PC-9 (cell line): ENCODE measurements at regions of chr7 and their contacts with region 1.

Region 1: GRCh38 chr7:45028920-45029344 is 28.9 kb downstream of the CCM2 start:
- DNase-seq: no peak
- H3K4me3 ChIP-seq: no peak overlapping the region
- H3K27ac ChIP-seq: no peak overlapping the region
- H3K4me1 ChIP-seq: no peaks in the 10 kb centered on the region
- H3K27me3 ChIP-seq: no peaks in the 10 kb centered on the region
- CTCF ChIP-seq: no peak

Region 2: GRCh38 chr7:44959433-44959951 is 69.4 kb before region 1 on chr7:
- CTCF ChIA-PET with region 1: no interaction called
- POLR2A ChIA-PET with region 1: interaction called, 32 read pairs
- intact Hi-C with region 1: no loop called
- DNase-seq: peak; percentile 74
- H3K4me3 ChIP-seq: no peak overlapping the region
- H3K27ac ChIP-seq: no peak overlapping the region
- H3K4me1 ChIP-seq: peaks cover 9% of the 10 kb centered on the region; the same call in 1 of the 2 replicates
- H3K27me3 ChIP-seq: no peaks in the 10 kb centered on the region
- CTCF ChIP-seq: no peak